ENCODE measurements at regions of chr11 and their contacts with region 1.

Region 1: GRCh38 chr11:70303070-70303469 is 32.6 kb downstream of the PPFIA1 start:
- DNase-seq: no peak
- H3K4me3 ChIP-seq: no peak overlapping the region
- H3K27ac ChIP-seq: no peak overlapping the region
- H3K4me1 ChIP-seq: no peaks in the 10 kb centered on the region
- H3K27me3 ChIP-seq: no peaks in the 10 kb centered on the region
- CTCF ChIP-seq: no peak

Region 2: GRCh38 chr11:70183483-70184169 is 119.4 kb before region 1 on chr11:
- CTCF ChIA-PET with region 1: no interaction called
- dilution Hi-C with region 1: loop called (anchors 5 kb)
- in situ Hi-C with region 1: no loop called
- intact Hi-C with region 1: no loop called
- DNase-seq: no peak
- H3K4me3 ChIP-seq: no peak overlapping the region
- H3K27ac ChIP-seq: no peak overlapping the region
- H3K4me1 ChIP-seq: no peaks in the 10 kb centered on the region
- H3K27me3 ChIP-seq: no peaks in the 10 kb centered on the region
- CTCF ChIP-seq: no peak

Region 3: DNA sequence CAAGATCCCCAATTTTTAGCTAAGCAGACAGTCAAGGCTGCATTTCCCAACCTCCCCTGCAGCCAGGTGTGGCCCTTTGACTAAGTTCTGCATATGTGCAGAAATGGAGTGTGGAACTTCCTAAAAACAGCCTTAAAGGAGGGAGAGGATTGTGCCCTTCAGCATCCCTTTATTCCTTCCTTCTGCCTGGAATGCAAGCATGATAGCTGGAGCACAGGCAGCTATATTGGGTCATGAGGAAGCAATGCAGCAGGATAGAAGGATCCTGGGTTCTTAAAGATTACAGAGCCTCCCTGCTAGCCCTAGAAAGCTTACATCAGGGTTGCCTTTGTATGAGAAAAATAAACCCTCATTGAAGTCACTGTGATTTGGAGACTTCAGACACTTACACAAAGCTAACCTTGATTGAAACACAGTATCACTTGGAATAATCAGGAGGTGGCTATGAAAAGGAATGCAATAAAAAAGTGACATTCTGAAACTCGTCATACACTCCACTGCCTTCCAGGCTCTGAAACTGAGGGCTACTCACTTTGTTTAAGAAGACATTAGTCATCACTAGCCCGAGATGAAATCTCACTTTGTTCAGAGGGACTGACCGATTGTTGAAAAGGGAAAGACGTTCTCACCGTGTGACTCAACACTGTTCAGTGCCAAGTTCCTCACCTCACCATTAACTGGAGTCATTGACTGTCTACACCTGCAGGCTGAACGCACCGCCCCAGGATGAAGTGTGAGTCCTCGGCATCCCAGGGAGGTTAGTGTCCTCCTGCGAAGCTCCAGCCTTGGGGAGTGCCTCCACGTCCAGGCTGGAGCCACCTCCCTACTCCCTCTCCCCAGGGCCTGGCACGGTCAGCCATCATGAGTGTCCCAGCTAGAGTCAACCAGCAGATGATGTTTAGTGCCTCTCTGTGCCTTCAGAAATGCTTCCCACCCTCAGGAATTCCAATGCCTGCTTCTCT is 69.8 kb before region 1 on chr11:
- CTCF ChIA-PET with region 1: no interaction called
- dilution Hi-C with region 1: loop called (anchors 5 kb)
- in situ Hi-C with region 1: no loop called
- intact Hi-C with region 1: no loop called
- DNase-seq: peak; percentile 100
- H3K4me3 ChIP-seq: no peak overlapping the region
- H3K27ac ChIP-seq: peak overlapping the region; percentile 77
- H3K4me1 ChIP-seq: peaks cover 13% of the 10 kb centered on the region
- H3K27me3 ChIP-seq: peaks cover 5% of the 10 kb centered on the region
- CTCF ChIP-seq: no peak

Region 4: DNA sequence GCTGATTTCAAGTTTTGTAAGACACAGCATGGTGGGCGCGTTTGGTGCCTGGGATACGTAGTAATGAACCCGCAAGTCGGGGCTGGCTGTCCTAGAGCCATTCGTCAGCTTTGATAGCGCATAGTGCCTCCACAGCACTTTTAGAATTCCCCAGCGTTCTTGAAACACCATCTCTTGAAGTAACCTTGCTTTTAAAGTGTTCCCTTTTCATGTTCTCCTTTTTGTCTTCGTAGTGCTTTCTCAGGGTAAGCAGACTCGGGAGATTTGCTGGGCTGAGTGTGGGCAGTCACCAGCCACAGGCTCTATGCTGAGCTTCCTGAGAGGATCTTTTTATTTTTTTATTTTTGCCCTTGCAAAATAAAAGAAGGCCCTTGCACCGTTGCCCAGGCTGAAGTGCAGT is 55.7 kb after region 1 on chr11:
- CTCF ChIA-PET with region 1: no interaction called
- dilution Hi-C with region 1: loop called (anchors 5 kb)
- in situ Hi-C with region 1: no loop called
- intact Hi-C with region 1: no loop called
- DNase-seq: no peak
- H3K4me3 ChIP-seq: no peak overlapping the region
- H3K27ac ChIP-seq: no peak overlapping the region
- H3K4me1 ChIP-seq: no peaks in the 10 kb centered on the region
- H3K27me3 ChIP-seq: no peaks in the 10 kb centered on the region
- CTCF ChIP-seq: no peak

Region 5: GRCh38 chr11:70467201-70468085 is 164.4 kb after region 1 on chr11:
- CTCF ChIA-PET with region 1: no interaction called
- dilution Hi-C with region 1: no loop called
- in situ Hi-C with region 1: no loop called
- intact Hi-C with region 1: no loop called
- DNase-seq: peak; percentile 15
- H3K4me3 ChIP-seq: no peak overlapping the region
- H3K27ac ChIP-seq: no peak overlapping the region
- H3K4me1 ChIP-seq: no peaks in the 10 kb centered on the region
- H3K27me3 ChIP-seq: no peaks in the 10 kb centered on the region
- CTCF ChIP-seq: peak; percentile 79 to 82